ENCODE measurements at regions of chr4 and their contacts with region 1.

Region 1: DNA sequence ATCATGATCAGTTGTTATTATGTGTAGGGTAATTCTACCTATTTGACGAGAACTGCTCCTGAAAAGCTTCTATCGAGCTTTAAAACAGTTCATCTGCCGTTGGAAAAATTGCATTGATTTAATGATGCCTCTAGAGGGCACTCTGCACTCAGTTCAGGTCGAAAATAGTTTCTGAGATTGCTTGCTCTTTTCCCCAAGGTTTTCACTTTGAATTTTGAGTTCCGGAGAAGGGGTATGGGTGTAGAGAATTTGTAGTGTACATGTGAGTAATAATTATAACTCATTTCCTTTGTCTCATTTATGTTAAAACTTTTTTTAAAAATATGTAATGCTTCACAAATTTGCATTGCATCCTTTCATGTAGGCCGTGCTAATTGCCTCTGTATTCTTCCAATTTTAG is 28.4 kb upstream of the TNIP3 start:
- DNase-seq: no peak
- H3K4me3 ChIP-seq: no peak overlapping the region
- H3K27ac ChIP-seq: no peak overlapping the region
- H3K4me1 ChIP-seq: no peaks in the 10 kb centered on the region
- H3K27me3 ChIP-seq: no peaks in the 10 kb centered on the region
- CTCF ChIP-seq: peak; percentile 63

Region 2: GRCh38 chr4:121252224-121252806 is 59.8 kb after region 1 on chr4:
- intact Hi-C with region 1: loop called (anchors 1 kb)
- DNase-seq: peak; percentile 71
- H3K4me3 ChIP-seq: no peak overlapping the region
- H3K27ac ChIP-seq: no peak overlapping the region
- H3K4me1 ChIP-seq: no peaks in the 10 kb centered on the region
- H3K27me3 ChIP-seq: no peaks in the 10 kb centered on the region
- CTCF ChIP-seq: peak; percentile 68

Region 3: GRCh38 chr4:121307445-121308327 is 115.2 kb after region 1 on chr4:
- intact Hi-C with region 1: loop called (anchors 5 kb)
- DNase-seq: peak; percentile 55
- H3K4me3 ChIP-seq: no peak overlapping the region
- H3K27ac ChIP-seq: no peak overlapping the region
- H3K4me1 ChIP-seq: no peaks in the 10 kb centered on the region
- H3K27me3 ChIP-seq: no peaks in the 10 kb centered on the region
- CTCF ChIP-seq: peak; percentile 64

Region 4: GRCh38 chr4:123046096-123046495 is 1853.6 kb after region 1 on chr4:
- intact Hi-C with region 1: no loop called
- DNase-seq: no peak
- H3K4me3 ChIP-seq: no peak overlapping the region
- H3K27ac ChIP-seq: no peak overlapping the region
- H3K4me1 ChIP-seq: no peaks in the 10 kb centered on the region
- H3K27me3 ChIP-seq: no peaks in the 10 kb centered on the region
- CTCF ChIP-seq: no peak

Measured in colonic mucosa (tissue), 4 donors.